ENCODE measurements at regions of chr10 and their contacts with region 1.

Region 1: GRCh38 chr10:101228153-101228973 is 900 bp downstream of the LBX1 start:
- DNase-seq: no peak
- H3K4me3 Mint-ChIP-seq: no peak overlapping the region
- H3K27ac Mint-ChIP-seq: no peak overlapping the region
- H3K4me1 Mint-ChIP-seq: peaks cover 39% of the 10 kb centered on the region
- H3K27me3 Mint-ChIP-seq: peaks cover 72% of the 10 kb centered on the region

Region 2: GRCh38 chr10:100653957-100654781 is 574.2 kb before region 1 on chr10:
- CTCF ChIA-PET with region 1: no interaction called
- intact Hi-C with region 1: loop called (anchors 10 kb)
- DNase-seq: peak; percentile 71
- H3K4me3 Mint-ChIP-seq: peak overlapping the region; percentile 71
- H3K27ac Mint-ChIP-seq: no peak overlapping the region
- H3K4me1 Mint-ChIP-seq: peaks cover 23% of the 10 kb centered on the region
- H3K27me3 Mint-ChIP-seq: peaks cover 61% of the 10 kb centered on the region

Region 3: DNA sequence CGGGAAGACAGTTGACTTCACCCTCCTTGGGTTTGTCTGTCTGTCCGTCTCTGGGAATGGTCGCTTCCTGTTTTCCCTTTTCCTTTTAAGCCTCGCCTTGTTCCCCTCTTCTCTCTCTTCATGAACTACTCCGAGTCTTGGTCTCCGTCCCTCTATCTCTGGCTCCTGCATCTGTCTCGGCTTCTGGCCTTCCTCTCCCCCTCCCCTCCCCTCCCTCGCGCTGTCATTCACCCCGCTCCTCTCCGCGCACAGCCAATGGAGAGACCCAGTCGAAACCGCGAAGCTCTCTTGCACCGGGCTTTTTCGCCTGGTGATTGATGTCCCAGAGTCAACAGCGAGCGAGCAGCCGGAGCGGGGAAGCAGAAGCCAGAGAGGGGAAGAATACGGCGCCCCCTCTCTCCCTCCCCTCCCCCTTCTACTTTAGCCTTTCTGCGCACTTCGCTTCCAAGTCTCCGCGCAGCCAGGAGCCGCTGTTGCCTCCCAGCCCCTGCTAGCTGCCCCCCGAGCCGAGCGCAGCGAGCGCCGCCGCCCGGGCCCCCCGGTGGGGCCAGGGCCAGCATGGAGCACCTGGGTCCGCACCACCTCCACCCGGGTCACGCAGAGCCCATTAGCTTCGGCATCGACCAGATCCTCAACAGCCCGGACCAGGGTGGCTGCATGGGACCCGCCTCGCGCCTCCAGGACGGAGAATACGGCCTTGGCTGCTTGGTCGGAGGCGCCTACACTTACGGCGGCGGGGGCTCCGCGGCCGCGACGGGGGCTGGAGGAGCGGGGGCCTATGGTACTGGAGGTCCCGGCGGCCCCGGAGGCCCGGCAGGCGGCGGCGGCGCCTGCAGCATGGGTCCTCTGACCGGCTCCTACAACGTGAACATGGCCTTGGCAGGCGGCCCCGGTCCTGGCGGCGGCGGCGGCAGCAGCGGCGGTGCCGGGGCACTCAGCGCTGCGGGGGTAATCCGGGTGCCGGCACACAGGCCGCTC is 97.1 kb before region 1 on chr10 and contains the start of gene TLX1:
- CTCF ChIA-PET with region 1: no interaction called
- intact Hi-C with region 1: loop called (anchors 2 kb)
- DNase-seq: no peak
- H3K4me3 Mint-ChIP-seq: no peak within 1 kb of the TSS
- H3K27ac Mint-ChIP-seq: no peak within 1 kb of the TSS
- H3K4me1 Mint-ChIP-seq: peaks cover 35% of the 10 kb centered on the region
- H3K27me3 Mint-ChIP-seq: peaks cover 83% of the 10 kb centered on the region
- total RNA-seq, gene TLX1: not detected

Region 4: GRCh38 chr10:101258179-101258885 is 30.0 kb after region 1 on chr10:
- CTCF ChIA-PET with region 1: no interaction called
- intact Hi-C with region 1: no loop called
- DNase-seq: no peak
- H3K4me3 Mint-ChIP-seq: no peak overlapping the region
- H3K27ac Mint-ChIP-seq: no peak overlapping the region
- H3K4me1 Mint-ChIP-seq: no peaks in the 10 kb centered on the region
- H3K27me3 Mint-ChIP-seq: peaks cover 29% of the 10 kb centered on the region

Region 5: GRCh38 chr10:101367569-101368453 is 139.4 kb after region 1 on chr10:
- CTCF ChIA-PET with region 1: no interaction called
- intact Hi-C with region 1: no loop called
- DNase-seq: no peak
- H3K4me3 Mint-ChIP-seq: no peak overlapping the region
- H3K27ac Mint-ChIP-seq: no peak overlapping the region
- H3K4me1 Mint-ChIP-seq: peaks cover 15% of the 10 kb centered on the region
- H3K27me3 Mint-ChIP-seq: no peaks in the 10 kb centered on the region